ENCODE measurements at regions of chr16 and their contacts with region 1.

Region 1: DNA sequence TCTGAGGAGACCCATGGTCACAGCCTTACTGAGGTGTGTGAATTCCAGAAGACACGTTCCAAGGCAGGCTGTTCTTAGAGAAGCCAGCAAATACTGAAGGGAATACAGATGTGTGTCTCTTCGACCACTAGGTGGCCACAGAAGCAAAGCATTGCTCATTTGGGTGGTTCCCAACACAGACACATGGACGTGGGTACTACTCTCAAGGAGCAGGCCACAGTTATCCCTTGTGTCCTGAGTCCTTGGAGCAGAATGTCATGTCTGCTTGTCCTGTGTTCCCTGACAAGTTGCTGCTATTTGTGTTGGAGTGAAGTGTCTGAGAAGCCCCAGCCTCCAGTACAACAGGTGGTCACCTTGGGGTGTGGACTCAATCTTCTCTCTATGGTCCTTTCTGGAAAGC is 30.3 kb downstream of the HMOX2 start:
- DNase-seq: peak; percentile 78
- ATAC-seq: peak; percentile 74
- H3K4me3 Mint-ChIP-seq: peak overlapping the region; percentile 68
- H3K27ac Mint-ChIP-seq: peak overlapping the region; percentile 94
- H3K4me1 Mint-ChIP-seq: peaks cover 60% of the 10 kb centered on the region
- H3K27me3 Mint-ChIP-seq: no peaks in the 10 kb centered on the region

Region 2: DNA sequence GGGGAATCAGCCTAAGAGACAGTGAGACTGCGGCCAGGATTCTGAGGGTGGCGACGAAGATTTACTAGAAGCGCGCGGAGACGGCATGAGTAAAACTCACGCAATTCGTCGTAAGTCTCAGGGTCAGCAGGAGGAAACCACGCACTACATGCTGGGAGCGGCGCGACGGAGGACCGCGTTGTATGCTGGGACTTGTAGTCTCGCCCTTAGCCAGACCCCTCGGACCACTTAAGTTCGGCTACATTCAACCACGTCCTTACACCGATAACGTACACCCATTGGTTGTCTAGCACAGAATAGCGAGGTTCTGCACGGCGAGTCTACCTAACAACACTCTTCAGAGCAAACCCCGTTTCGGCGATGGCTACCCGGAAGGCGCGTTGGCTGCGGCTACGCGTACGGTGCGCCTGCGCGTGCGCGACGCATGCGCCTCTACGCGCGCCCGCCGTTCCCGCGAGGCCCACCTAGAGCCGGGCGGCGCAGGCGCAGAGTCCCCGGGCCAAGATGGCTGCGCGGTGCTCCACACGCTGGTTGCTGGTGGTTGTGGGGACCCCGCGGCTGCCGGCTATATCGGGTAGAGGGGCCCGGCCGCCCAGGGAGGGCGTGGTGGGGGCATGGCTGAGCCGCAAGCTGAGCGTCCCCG is 81.0 kb before region 1 on chr16 and contains the start of gene DNAJA3:
- CTCF ChIA-PET with region 1: no interaction called
- DNase-seq: peak; percentile 94
- ATAC-seq: peak; percentile 94
- H3K4me3 Mint-ChIP-seq: peak within 1 kb of the TSS; percentile 97
- H3K27ac Mint-ChIP-seq: peak within 1 kb of the TSS; percentile 100
- H3K4me1 Mint-ChIP-seq: peaks cover 36% of the 10 kb centered on the region
- H3K27me3 Mint-ChIP-seq: no peaks in the 10 kb centered on the region
- total RNA-seq, gene DNAJA3: 64.0 to 68.7 TPM

Region 3: DNA sequence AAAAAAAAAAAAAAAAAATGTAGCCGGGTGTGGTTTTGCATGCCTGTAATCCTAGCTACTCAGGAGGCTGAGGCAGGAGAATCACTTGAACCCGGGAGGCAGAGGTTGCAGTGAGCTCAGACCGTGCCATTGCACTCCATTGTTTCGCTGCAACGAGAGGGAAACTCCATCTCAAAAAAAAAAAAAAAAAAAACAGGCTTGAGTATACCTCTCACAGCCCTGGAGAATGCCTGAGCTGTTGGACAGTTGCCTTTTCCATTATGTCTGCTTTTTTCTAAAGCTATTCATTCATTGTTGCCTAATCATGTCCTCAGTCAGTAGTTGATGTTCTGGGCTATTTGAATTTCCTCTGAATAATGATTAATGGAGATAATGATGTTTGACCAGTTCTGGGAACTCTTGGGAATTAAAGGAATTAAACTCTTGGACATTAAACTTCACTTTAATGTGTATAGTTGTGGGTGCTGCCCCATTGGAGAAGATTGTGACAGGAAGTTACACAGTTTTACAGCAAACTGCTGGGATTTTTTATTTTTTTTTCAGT is 18.4 kb before region 1 on chr16:
- CTCF ChIA-PET with region 1: interaction called, 84 read pairs
- DNase-seq: no peak
- ATAC-seq: peak; percentile 60
- H3K4me3 Mint-ChIP-seq: peak overlapping the region; percentile 48
- H3K27ac Mint-ChIP-seq: peak overlapping the region; percentile 96
- H3K4me1 Mint-ChIP-seq: peaks cover 48% of the 10 kb centered on the region
- H3K27me3 Mint-ChIP-seq: no peaks in the 10 kb centered on the region

Region 4: DNA sequence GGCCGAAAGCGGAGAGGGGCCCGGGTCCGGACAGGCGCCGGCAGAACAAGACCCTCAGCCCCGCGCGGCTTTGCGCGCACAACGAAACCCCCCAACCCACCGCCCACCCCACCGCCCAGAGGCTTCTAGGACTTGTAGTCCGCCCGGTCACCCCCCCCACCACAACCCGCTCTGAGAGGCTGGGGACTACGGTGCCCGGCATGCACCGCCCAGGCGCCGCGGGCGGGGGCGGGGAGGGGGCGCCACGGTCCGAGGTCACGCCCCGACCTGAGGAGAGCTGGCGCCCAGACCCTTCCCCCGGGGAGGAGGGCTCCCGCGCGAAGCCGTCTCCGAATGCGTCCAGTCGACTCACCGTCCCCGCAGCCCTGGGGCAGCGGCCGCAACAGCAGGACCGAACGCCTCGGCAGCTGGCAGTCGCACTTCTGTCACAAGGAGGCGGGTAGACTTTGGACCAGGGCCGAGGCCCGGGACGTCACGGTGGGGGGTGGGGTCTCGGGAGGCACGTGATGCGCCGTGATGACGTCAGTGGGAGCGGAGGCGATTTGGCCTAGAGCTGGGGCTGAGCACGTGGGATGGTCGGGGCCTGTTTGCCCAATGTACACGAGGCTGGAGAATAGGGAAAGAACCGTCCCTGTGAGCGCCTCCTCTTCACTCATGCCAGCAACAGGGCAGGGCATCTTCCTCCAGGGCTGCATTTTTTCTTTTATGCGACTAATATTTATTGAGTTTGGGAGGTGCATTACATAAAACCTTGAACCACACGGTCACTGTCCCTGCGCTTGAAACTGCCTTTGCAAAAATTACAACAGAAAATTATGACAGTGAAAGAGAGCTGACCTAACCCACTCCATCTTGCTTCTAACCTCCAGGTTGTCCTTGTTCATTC is 32.1 kb after region 1 on chr16 and contains the start of gene CDIP1:
- CTCF ChIA-PET with region 1: interaction called, 16 read pairs
- DNase-seq: peak; percentile 97
- ATAC-seq: peak; percentile 85
- H3K4me3 Mint-ChIP-seq: peak within 1 kb of the TSS; percentile 67
- H3K27ac Mint-ChIP-seq: peak within 1 kb of the TSS; percentile 72
- H3K4me1 Mint-ChIP-seq: peaks cover 37% of the 10 kb centered on the region
- H3K27me3 Mint-ChIP-seq: no peaks in the 10 kb centered on the region
- total RNA-seq, gene CDIP1: 45.2 to 57.3 TPM

Region 5: DNA sequence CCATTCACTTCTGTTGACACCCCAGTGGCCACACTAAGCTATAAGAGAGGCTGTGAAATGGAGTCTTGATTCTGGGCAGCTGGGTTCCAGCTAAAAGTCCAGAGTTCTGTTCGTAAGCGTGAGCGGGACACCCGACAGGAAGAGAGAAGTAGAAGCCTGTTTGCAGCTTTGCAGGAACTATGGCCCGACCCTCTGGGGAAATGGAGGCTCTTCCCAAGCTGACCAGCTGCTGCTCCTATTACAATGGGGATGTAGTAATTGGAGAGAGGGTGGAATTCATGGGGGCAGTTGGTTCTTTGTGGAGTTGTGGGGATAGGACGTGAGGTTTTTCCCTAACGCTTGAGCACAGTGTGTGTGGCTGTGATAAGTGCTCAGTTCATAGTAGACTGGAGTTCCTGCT is 79.8 kb after region 1 on chr16:
- CTCF ChIA-PET with region 1: interaction called, 31 read pairs
- DNase-seq: no peak
- ATAC-seq: no peak
- H3K4me3 Mint-ChIP-seq: no peak overlapping the region
- H3K27ac Mint-ChIP-seq: no peak overlapping the region
- H3K4me1 Mint-ChIP-seq: peaks cover 3% of the 10 kb centered on the region
- H3K27me3 Mint-ChIP-seq: peaks cover 13% of the 10 kb centered on the region

Region 6: GRCh38 chr16:4624015-4624826 is 117.8 kb after region 1 on chr16 and contains the start of gene MGRN1:
- CTCF ChIA-PET with region 1: interaction called, 31 read pairs
- DNase-seq: peak; percentile 96
- ATAC-seq: peak; percentile 87
- H3K4me3 Mint-ChIP-seq: peak within 1 kb of the TSS; percentile 89
- H3K27ac Mint-ChIP-seq: peak within 1 kb of the TSS; percentile 98
- H3K4me1 Mint-ChIP-seq: peaks cover 31% of the 10 kb centered on the region
- H3K27me3 Mint-ChIP-seq: no peaks in the 10 kb centered on the region
- total RNA-seq, gene MGRN1: 76.9 to 92.1 TPM